ENCODE measurements at regions of chr21 and their contacts with region 1.

Region 1: GRCh38 chr21:14545906-14546480 is at the start of gene SAMSN1:
- DNase-seq: peak in 8 of 9 donors; percentile 62 to 84 (median 78)
- ATAC-seq: peak; percentile 93
- H3K4me3 ChIP-seq: peak within 1 kb of the TSS; percentile 78
- H3K4me3 Mint-ChIP-seq: peak within 1 kb of the TSS; percentile 81 to 99 (median 93)
- H3K27ac ChIP-seq: peak within 1 kb of the TSS; percentile 82
- H3K27ac Mint-ChIP-seq: peak within 1 kb of the TSS; percentile 81 to 97 (median 93)
- H3K4me1 ChIP-seq: peaks cover 43 to 50% of the 10 kb centered on the region in 2 donors
- H3K4me1 Mint-ChIP-seq: peaks cover 31 to 79% (median 67%) of the 10 kb centered on the region in 7 donors
- H3K27me3 ChIP-seq: no peaks in the 10 kb centered on the region
- H3K27me3 Mint-ChIP-seq: no peaks in the 10 kb centered on the region
- total RNA-seq, gene SAMSN1: 27.5 to 136 (median 38.0) TPM

Region 2: GRCh38 chr21:14215971-14216641 is 329.9 kb before region 1 on chr21 and contains the start of gene RBM11:
- CTCF ChIA-PET with region 1: no interaction called
- POLR2A ChIA-PET with region 1: no interaction called
- intact Hi-C with region 1: loop called in 1 of 2 experiments (anchors 5 kb)
- DNase-seq: peak; percentile 69 to 88 (median 82)
- ATAC-seq: peak; percentile 99
- H3K4me3 ChIP-seq: peak within 1 kb of the TSS; percentile 80
- H3K4me3 Mint-ChIP-seq: peak within 1 kb of the TSS; percentile 86 to 93 (median 90)
- H3K27ac ChIP-seq: peak within 1 kb of the TSS; percentile 77
- H3K27ac Mint-ChIP-seq: peak within 1 kb of the TSS in 8 of 9 donors; percentile 61 to 88 (median 82)
- H3K4me1 ChIP-seq: peaks cover 0 to 8% of the 10 kb centered on the region in 2 donors
- H3K4me1 Mint-ChIP-seq: peaks cover 0 to 10% (median 8%) of the 10 kb centered on the region in 7 donors
- H3K27me3 ChIP-seq: no peaks in the 10 kb centered on the region
- H3K27me3 Mint-ChIP-seq: peaks cover 4 to 26% (median 8%) of the 10 kb centered on the region in 5 donors
- total RNA-seq, gene RBM11: 0.46 to 19.3 (median 4.9) TPM

Region 3: DNA sequence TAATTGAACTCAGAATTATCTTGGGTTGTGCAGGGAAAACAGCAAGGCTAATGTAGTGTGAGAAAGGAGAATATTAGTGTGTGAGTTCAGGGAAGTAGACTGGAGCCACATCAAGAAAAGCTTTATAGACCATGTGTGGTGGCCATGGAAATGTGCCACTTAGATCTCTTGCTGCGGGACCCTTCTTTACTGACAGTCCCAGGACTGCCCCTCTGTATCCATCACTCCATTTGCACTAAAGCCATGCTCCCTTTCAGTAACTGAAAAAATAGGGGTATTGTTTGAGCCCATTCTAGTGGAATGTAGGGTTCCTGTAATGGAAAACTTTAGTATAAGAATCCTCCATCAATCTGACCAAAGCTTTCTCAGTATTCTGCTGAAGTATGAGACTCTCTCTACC is 32.2 kb before region 1 on chr21:
- CTCF ChIA-PET with region 1: no interaction called
- POLR2A ChIA-PET with region 1: no interaction called
- intact Hi-C with region 1: loop called in 1 of 2 experiments (anchors 5 kb)
- DNase-seq: no peak
- ATAC-seq: peak; percentile 28
- H3K4me3 ChIP-seq: no peak overlapping the region
- H3K4me3 Mint-ChIP-seq: no peak overlapping the region
- H3K27ac ChIP-seq: no peak overlapping the region
- H3K27ac Mint-ChIP-seq: peak overlapping the region in 2 of 9 donors; percentile 32 to 41
- H3K4me1 ChIP-seq: no peaks in the 10 kb centered on the region
- H3K4me1 Mint-ChIP-seq: peaks cover 5 to 46% (median 8%) of the 10 kb centered on the region in 7 donors
- H3K27me3 ChIP-seq: no peaks in the 10 kb centered on the region
- H3K27me3 Mint-ChIP-seq: no peaks in the 10 kb centered on the region

Region 4: GRCh38 chr21:14560555-14560954 is 14.6 kb after region 1 on chr21:
- CTCF ChIA-PET with region 1: no interaction called
- POLR2A ChIA-PET with region 1: interaction called, 4 read pairs
- intact Hi-C with region 1: loop called (anchors 1 to 2 kb)
- DNase-seq: no peak
- ATAC-seq: no peak
- H3K4me3 ChIP-seq: no peak overlapping the region
- H3K4me3 Mint-ChIP-seq: peak overlapping the region in 1 of 10 donors; percentile 15
- H3K27ac ChIP-seq: no peak overlapping the region
- H3K27ac Mint-ChIP-seq: peak overlapping the region in 1 of 9 donors; percentile 25
- H3K4me1 ChIP-seq: peaks cover 0 to 4% of the 10 kb centered on the region in 2 donors
- H3K4me1 Mint-ChIP-seq: peaks cover 4 to 66% (median 18%) of the 10 kb centered on the region in 7 donors
- H3K27me3 ChIP-seq: no peaks in the 10 kb centered on the region
- H3K27me3 Mint-ChIP-seq: no peaks in the 10 kb centered on the region

Region 5: GRCh38 chr21:14591882-14592281 is 45.9 kb after region 1 on chr21:
- CTCF ChIA-PET with region 1: no interaction called
- POLR2A ChIA-PET with region 1: no interaction called
- intact Hi-C with region 1: loop called in 1 of 2 experiments (anchors 1 kb)
- DNase-seq: peak in 4 of 9 donors; percentile 6 to 24 (median 11)
- ATAC-seq: peak; percentile 91
- H3K4me3 ChIP-seq: no peak overlapping the region
- H3K4me3 Mint-ChIP-seq: peak overlapping the region in 3 of 10 donors; percentile 3 to 70 (median 22)
- H3K27ac ChIP-seq: no peak overlapping the region
- H3K27ac Mint-ChIP-seq: peak overlapping the region in 4 of 9 donors; percentile 4 to 90 (median 33)
- H3K4me1 ChIP-seq: peaks cover 3 to 11% of the 10 kb centered on the region in 2 donors
- H3K4me1 Mint-ChIP-seq: peaks cover 8 to 43% (median 15%) of the 10 kb centered on the region in 7 donors
- H3K27me3 ChIP-seq: no peaks in the 10 kb centered on the region
- H3K27me3 Mint-ChIP-seq: no peaks in the 10 kb centered on the region

Region 6: DNA sequence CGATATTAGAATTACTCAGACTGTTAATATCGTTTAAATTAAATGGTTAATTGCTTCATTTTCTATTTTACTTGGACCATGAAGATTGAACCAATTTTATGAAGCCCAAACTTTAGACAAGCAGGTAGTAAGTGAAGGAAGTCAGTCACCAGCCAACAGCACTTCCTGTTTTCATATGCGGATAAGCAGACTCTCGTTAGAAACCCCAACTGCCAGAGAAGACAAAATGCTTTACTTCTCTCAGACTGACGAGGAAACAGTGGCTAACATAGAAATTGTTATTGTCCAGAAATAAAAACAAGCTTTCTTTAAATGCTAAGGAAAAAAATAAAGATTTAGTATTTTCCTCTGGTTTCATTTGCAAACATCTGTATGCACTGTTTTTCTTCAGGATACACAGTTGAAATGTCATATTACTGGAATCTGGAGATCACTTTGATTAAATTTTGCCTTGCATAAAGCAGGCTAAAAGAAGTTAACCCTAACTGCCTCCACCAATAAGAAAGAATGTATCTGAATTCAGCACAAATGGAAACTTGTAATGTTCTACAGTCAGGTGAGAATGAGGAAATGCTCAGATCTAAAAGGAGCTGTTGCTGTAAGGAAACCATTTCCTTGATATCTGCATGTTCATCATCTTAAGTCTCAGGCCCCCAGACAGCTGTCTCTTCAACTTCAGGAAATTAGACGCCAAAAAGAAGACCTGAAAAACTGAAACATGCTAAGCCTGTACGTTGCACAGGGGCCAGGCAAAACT is 130.0 kb after region 1 on chr21:
- CTCF ChIA-PET with region 1: no interaction called
- POLR2A ChIA-PET with region 1: interaction called, 3 read pairs
- intact Hi-C with region 1: loop called (anchors 1 kb)
- DNase-seq: peak in 7 of 9 donors; percentile 52 to 78 (median 70)
- ATAC-seq: peak; percentile 90
- H3K4me3 ChIP-seq: peak overlapping the region; percentile 19
- H3K4me3 Mint-ChIP-seq: peak overlapping the region; percentile 12 to 82 (median 78)
- H3K27ac ChIP-seq: peak overlapping the region; percentile 68
- H3K27ac Mint-ChIP-seq: peak overlapping the region; percentile 94 to 100 (median 98)
- H3K4me1 ChIP-seq: peaks cover 21 to 28% of the 10 kb centered on the region in 2 donors
- H3K4me1 Mint-ChIP-seq: peaks cover 32 to 68% (median 60%) of the 10 kb centered on the region in 7 donors
- H3K27me3 ChIP-seq: no peaks in the 10 kb centered on the region
- H3K27me3 Mint-ChIP-seq: no peaks in the 10 kb centered on the region

Region 7: DNA sequence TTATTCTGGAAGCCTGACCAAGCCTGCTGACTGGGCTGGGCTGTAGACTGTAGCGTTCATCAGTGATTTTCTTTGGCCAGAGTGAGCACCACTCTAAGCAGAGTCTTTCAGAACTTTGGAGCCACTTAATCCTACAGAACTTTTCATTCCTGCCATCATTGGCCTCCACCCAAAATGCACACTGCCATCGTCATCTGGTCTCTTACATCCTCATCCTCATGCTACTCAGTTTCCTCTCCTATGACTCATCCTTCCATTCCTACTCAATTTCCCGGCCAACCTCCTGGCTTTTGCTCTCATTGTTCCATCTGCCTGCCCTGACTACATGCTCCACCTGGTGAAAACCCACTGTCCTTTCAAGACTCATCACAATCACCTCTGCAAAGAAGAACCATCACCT is 950.0 kb after region 1 on chr21:
- CTCF ChIA-PET with region 1: no interaction called
- POLR2A ChIA-PET with region 1: no interaction called
- intact Hi-C with region 1: no loop called
- DNase-seq: no peak
- ATAC-seq: no peak
- H3K4me3 ChIP-seq: no peak overlapping the region
- H3K4me3 Mint-ChIP-seq: no peak overlapping the region
- H3K27ac ChIP-seq: no peak overlapping the region
- H3K27ac Mint-ChIP-seq: no peak overlapping the region
- H3K4me1 ChIP-seq: no peaks in the 10 kb centered on the region
- H3K4me1 Mint-ChIP-seq: peaks cover 0 to 8% (median 2%) of the 10 kb centered on the region in 7 donors
- H3K27me3 ChIP-seq: no peaks in the 10 kb centered on the region
- H3K27me3 Mint-ChIP-seq: peaks cover 0 to 3% (median 0%) of the 10 kb centered on the region in 5 donors

Region 8: GRCh38 chr21:15514073-15514946 is 968.3 kb after region 1 on chr21:
- CTCF ChIA-PET with region 1: no interaction called
- POLR2A ChIA-PET with region 1: no interaction called
- intact Hi-C with region 1: loop called in 1 of 2 experiments (anchors 5 kb)
- DNase-seq: peak in 8 of 9 donors; percentile 34 to 87 (median 82)
- ATAC-seq: peak; percentile 99
- H3K4me3 ChIP-seq: peak overlapping the region; percentile 23
- H3K4me3 Mint-ChIP-seq: peak overlapping the region; percentile 59 to 76 (median 69)
- H3K27ac ChIP-seq: peak overlapping the region; percentile 46
- H3K27ac Mint-ChIP-seq: peak overlapping the region; percentile 75 to 94 (median 87)
- H3K4me1 ChIP-seq: peaks cover 12 to 32% of the 10 kb centered on the region in 2 donors
- H3K4me1 Mint-ChIP-seq: peaks cover 16 to 54% (median 31%) of the 10 kb centered on the region in 7 donors
- H3K27me3 ChIP-seq: no peaks in the 10 kb centered on the region
- H3K27me3 Mint-ChIP-seq: no peaks in the 10 kb centered on the region

Region 9: GRCh38 chr21:15688809-15689208 is 1142.8 kb after region 1 on chr21:
- CTCF ChIA-PET with region 1: no interaction called
- POLR2A ChIA-PET with region 1: no interaction called
- intact Hi-C with region 1: no loop called
- DNase-seq: no peak
- ATAC-seq: no peak
- H3K4me3 ChIP-seq: no peak overlapping the region
- H3K4me3 Mint-ChIP-seq: peak overlapping the region in 1 of 10 donors; percentile 5
- H3K27ac ChIP-seq: no peak overlapping the region
- H3K27ac Mint-ChIP-seq: no peak overlapping the region
- H3K4me1 ChIP-seq: no peaks in the 10 kb centered on the region
- H3K4me1 Mint-ChIP-seq: peaks cover 0 to 3% (median 0%) of the 10 kb centered on the region in 7 donors
- H3K27me3 ChIP-seq: no peaks in the 10 kb centered on the region
- H3K27me3 Mint-ChIP-seq: peaks cover 0 to 4% (median 3%) of the 10 kb centered on the region in 5 donors